ENCODE measurements at regions of chr4 and their contacts with region 1.

Region 1: GRCh38 chr4:38374791-38375054 is 289.3 kb upstream of the KLF3 start:
- DNase-seq: no peak
- ATAC-seq: no peak

Region 2: DNA sequence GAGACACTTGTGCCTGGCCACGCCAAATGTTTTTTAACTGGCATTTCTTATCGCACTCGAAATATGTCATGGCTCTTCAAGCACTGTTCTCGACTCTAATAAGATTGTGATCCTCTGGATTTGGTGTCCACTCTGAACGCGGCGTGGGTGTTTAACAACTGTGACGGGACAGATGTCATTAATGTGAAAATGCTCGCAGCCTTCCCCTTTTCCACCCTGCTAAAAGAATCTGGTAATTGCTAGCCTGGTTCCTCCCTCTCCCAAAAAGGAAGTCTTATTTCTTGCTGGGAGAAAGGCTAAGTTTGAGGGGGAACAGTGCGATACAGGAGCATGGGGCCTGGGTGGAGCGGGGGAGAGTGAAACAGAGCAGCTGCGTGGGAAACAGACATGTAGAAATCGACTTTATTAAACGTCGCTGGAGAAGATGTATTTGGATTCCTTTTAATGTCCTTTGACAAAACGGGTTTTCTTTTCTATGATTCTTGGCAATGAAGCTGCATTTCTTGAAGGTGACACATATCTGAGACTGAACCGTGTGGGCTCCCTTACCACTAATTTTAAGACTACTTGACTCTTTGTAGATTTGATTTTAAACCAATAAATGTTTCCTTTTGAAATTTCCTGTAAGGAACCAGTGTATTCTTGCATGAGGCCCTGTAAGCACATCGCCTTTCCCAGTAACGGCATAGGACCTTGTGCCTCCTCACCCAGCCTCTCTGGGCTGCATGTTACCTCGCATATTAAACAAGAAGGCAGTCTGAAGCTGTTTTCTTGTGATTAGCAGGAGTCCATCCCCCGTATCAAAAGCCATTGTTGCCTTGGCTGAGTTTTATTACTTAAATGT is 466.0 kb before region 1 on chr4:
- intact Hi-C with region 1: no loop called
- DNase-seq: no peak
- ATAC-seq: peak; percentile 60

Region 3: DNA sequence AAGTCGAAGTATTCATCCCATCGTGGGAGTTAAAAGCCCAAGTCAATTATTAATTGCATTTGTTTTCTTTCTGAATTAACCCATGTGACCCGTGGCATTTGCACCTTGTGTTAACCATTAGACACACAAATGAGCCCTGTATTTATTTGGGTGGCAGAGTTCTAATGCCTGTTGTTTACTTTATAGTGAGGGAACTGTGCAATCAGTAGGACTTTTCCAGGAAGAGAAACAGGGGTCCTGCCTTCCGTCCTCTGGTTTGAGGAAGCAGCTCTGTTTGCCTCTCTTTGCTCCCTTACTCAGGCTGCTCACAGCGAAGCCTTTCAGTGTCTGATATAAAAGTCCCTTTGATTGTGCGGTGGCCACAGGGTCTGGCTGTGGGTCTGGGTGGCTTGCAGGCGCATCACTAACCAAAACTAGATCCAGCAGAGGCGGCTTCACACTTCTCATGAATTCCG is 150.9 kb before region 1 on chr4:
- intact Hi-C with region 1: no loop called
- DNase-seq: no peak
- ATAC-seq: no peak

Region 4: DNA sequence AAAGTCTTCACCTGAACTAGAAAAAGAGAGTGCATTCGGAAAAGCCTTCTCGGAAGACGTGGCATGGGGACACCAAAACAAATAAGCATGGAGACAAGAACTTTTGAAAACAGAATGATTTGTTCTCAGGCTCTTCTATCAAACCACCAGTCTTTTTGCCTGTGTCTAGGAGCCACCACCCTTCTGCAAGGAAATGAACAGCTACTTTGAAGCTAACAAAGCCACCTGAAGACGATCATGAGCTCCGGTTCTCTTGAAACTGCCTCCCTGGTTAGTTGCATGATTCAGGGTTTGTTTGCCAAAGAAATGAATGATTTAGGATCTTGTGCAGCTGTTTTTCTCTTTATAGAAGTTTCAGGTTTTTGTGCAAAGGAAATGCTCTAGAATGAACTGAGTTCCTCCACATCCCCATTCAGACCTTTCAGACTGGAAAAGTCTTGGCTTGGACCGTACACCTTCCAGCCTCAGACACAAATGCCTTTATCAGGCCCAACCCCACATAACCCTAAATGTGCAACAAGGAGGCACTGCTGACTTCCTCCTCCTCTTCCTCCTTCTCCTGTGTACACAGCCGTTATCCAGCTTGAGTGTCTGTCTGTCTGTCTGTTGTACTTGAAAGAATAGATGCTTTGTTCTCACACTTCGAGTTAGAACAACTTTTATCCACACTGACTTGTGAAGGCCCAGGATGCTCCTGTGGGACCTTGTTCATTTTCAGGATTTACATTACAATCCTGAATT is 45.6 kb before region 1 on chr4:
- intact Hi-C with region 1: loop called (anchors 5 kb)
- DNase-seq: no peak
- ATAC-seq: no peak

Measured in Right ventricle myocardium inferior (tissue), 1 donor.